Activated T-helper 2 cell treated with anti-CD3 and anti-CD28 coated beads, Interferon-gamma antibody, Interleukin-2, Interleukin-4, amounts not matched to agents 10 μg/mL and 5 μg/mL and 100 μg/mL, durations not matched to agents 14 hours and 24 hours and 36 hours (primary cell): ENCODE measurements at regions of chr12 and their contacts with region 1.

Region 1: DNA sequence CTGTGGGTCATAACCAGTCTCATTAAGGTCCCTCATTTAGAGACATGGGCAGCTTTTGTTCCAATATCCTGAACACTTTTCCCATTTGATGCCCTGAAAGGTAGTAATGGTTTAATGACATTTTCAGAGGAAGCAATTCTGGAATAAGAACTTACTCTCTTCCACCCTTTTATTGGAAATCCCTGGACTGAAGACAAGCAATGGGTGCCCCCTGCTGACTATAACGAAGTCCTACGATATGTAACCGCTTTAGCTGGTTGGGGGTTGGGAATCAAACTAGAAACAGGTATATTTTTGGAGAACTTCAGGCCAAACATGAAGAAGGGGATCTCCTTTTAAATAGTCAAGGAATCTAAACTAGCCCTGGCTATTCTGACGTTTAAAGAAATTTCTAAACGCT is 20.5 kb downstream of the SARNP start:
- DNase-seq: no peak
- H3K4me3 Mint-ChIP-seq: no peak overlapping the region
- H3K27ac Mint-ChIP-seq: peak overlapping the region; percentile 45
- H3K4me1 Mint-ChIP-seq: peaks cover 20% of the 10 kb centered on the region
- H3K27me3 Mint-ChIP-seq: no peaks in the 10 kb centered on the region

Region 2: GRCh38 chr12:55250944-55251343 is 546.1 kb before region 1 on chr12:
- intact Hi-C with region 1: no loop called
- DNase-seq: no peak
- H3K4me3 Mint-ChIP-seq: no peak overlapping the region
- H3K27ac Mint-ChIP-seq: no peak overlapping the region
- H3K4me1 Mint-ChIP-seq: no peaks in the 10 kb centered on the region
- H3K27me3 Mint-ChIP-seq: peaks cover 16% of the 10 kb centered on the region

Region 3: GRCh38 chr12:55780685-55781084 is 16.4 kb before region 1 on chr12:
- intact Hi-C with region 1: loop called (anchors 2 kb)
- DNase-seq: no peak
- H3K4me3 Mint-ChIP-seq: no peak overlapping the region
- H3K27ac Mint-ChIP-seq: peak overlapping the region; percentile 51
- H3K4me1 Mint-ChIP-seq: peaks cover 20% of the 10 kb centered on the region
- H3K27me3 Mint-ChIP-seq: no peaks in the 10 kb centered on the region

Region 4: DNA sequence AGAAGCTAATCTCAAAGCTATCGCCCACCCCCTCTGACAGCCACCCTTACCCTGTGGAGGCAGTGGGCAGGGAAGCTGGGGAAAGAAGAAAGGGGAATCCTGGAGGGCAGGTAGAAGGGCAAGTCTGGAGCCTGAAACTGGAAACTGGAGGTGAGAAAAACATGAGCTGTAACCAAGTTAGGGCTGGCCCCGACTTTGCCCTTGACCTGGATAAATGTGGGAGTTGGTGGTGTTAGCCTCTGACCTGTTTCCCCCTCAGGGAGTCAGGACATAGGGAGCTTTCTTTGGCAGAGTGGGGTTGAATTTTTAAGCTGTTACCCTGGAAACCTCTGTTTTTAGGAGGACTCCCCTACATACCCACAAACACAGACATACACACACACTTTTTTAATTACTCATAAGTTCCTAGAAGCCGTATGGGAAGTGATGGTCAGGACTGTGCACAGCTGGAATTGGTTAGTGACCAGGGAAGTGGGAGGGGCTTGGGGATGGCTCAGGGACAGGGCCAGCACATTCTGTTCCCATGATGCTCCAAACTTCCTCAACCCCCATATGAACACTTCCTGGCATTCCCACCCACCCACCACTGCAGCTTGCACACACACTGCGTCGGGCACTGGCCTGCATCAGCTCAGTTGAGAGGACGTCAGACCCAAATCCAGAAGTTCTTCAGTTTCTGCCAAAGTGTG is 50.7 kb after region 1 on chr12:
- intact Hi-C with region 1: no loop called
- DNase-seq: no peak
- H3K4me3 Mint-ChIP-seq: no peak overlapping the region
- H3K27ac Mint-ChIP-seq: peak overlapping the region; percentile 73
- H3K4me1 Mint-ChIP-seq: peaks cover 8% of the 10 kb centered on the region
- H3K27me3 Mint-ChIP-seq: peaks cover 15% of the 10 kb centered on the region